Spleen (tissue), 13 donors: ENCODE measurements at regions of chr6 and their contacts with region 1.

Region 1: GRCh38 chr6:125307150-125307838 is 5.5 kb upstream of the HDDC2 start:
- DNase-seq: no peak
- H3K4me3 ChIP-seq: no peak overlapping the region
- H3K27ac ChIP-seq: no peak overlapping the region
- H3K4me1 ChIP-seq: peaks cover 0 to 30% (median 3%) of the 10 kb centered on the region in 6 donors
- H3K27me3 ChIP-seq: peaks cover 0 to 7% (median 0%) of the 10 kb centered on the region in 7 donors
- CTCF ChIP-seq: no peak
- POLR2A ChIP-seq: no peak

Region 2: DNA sequence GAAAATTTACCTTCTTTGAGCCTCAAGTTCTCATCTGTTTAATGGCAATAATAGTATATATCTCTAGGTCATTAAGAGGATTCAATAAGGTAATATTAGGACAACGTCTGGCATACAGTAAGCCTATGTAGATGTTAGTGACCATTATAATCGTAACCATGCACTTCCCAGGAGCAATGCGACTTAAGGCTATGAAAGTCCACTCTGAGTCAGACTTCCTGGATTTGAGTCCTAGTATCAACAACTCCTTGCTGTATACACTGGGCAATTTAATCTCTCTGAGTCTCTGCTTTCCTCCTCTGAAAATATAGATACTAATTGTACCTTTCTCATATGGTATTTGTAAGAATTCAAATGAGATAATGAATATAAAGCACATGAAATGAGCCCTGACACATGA is 162.6 kb after region 1 on chr6:
- intact Hi-C with region 1: no loop called
- DNase-seq: no peak
- H3K4me3 ChIP-seq: no peak overlapping the region
- H3K27ac ChIP-seq: no peak overlapping the region
- H3K4me1 ChIP-seq: no peaks in the 10 kb centered on the region
- H3K27me3 ChIP-seq: no peaks in the 10 kb centered on the region
- CTCF ChIP-seq: no peak
- POLR2A ChIP-seq: no peak

Region 3: GRCh38 chr6:125753218-125753936 is 446.1 kb after region 1 on chr6:
- intact Hi-C with region 1: loop called (anchors 2 kb)
- DNase-seq: no peak
- H3K4me3 ChIP-seq: no peak overlapping the region
- H3K27ac ChIP-seq: no peak overlapping the region
- H3K4me1 ChIP-seq: peaks cover 6 to 36% (median 21%) of the 10 kb centered on the region in 6 donors
- H3K27me3 ChIP-seq: peaks cover 0 to 66% (median 36%) of the 10 kb centered on the region in 7 donors
- CTCF ChIP-seq: peak in 8 of 11 experiments; percentile 30 to 60 (median 47)
- POLR2A ChIP-seq: no peak